Naive thymus-derived CD4-positive, alpha-beta T cell (primary cell): ENCODE measurements at regions of chr1 and their contacts with region 1.

Region 1: DNA sequence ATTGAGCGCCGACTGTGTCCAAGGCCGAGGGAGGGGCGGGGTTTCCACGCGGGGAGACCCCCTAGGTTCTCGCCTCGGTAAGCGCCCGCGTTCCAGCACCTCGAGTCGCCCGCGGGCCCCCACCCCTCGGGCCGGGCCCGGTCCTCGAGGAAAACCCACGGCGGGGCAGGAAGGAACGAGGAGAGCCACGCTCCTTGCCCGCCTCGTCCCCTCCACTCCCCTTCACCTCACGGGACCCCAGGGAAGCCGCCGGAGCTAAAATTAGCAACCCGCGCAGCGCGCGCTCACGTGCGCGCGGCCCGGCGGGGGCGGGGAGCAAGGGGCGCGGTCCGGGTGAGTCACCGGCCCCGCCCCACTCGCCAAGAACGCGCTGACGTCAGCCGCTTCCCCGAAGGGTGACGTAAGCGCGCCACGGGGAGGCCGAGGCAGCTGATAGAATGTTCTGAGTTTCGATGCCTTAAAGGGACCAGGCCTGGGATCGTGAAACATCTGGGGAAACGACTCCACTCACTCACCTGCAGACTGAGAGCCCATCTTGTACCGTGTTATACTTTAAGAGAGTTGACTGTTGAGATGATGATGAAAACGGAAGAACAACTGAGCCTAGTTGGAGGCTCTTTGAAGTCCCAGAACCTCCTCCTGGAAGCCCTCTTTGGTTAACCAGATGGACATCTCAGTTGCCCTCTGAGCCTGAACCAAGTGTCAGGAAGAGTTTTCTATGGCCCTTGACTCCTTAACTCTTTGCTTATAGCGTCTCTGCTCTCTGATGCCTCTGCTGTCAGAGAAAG is 49.7 kb upstream of the ATF3 start:
- DNase-seq: peak; percentile 83 to 93 (median 91)
- ATAC-seq: peak; percentile 97
- H3K4me3 ChIP-seq: peak overlapping the region; percentile 54
- H3K4me3 Mint-ChIP-seq: peak overlapping the region; percentile 82 to 95 (median 90)
- H3K27ac ChIP-seq: peak overlapping the region; percentile 74
- H3K27ac Mint-ChIP-seq: peak overlapping the region; percentile 91 to 99 (median 98)
- H3K4me1 ChIP-seq: peaks cover 7 to 13% of the 10 kb centered on the region in 2 donors
- H3K4me1 Mint-ChIP-seq: peaks cover 6 to 15% (median 9%) of the 10 kb centered on the region in 7 donors
- H3K27me3 ChIP-seq: no peaks in the 10 kb centered on the region
- H3K27me3 Mint-ChIP-seq: peaks cover 0 to 45% (median 0%) of the 10 kb centered on the region in 5 donors

Region 2: GRCh38 chr1:211675230-211676105 is 883.4 kb before region 1 on chr1 and contains the start of gene NEK2:
- CTCF ChIA-PET with region 1: no interaction called
- POLR2A ChIA-PET with region 1: no interaction called
- intact Hi-C with region 1: loop called in 1 of 2 experiments (anchors 5 kb)
- DNase-seq: peak; percentile 53 to 90 (median 85)
- ATAC-seq: peak; percentile 97
- H3K4me3 ChIP-seq: peak within 1 kb of the TSS; percentile 76
- H3K4me3 Mint-ChIP-seq: peak within 1 kb of the TSS; percentile 88 to 96 (median 92)
- H3K27ac ChIP-seq: peak within 1 kb of the TSS; percentile 56
- H3K27ac Mint-ChIP-seq: peak within 1 kb of the TSS; percentile 45 to 88 (median 80)
- H3K4me1 ChIP-seq: peaks cover 5 to 7% of the 10 kb centered on the region in 2 donors
- H3K4me1 Mint-ChIP-seq: peaks cover 8 to 38% (median 13%) of the 10 kb centered on the region in 7 donors
- H3K27me3 ChIP-seq: no peaks in the 10 kb centered on the region
- H3K27me3 Mint-ChIP-seq: no peaks in the 10 kb centered on the region
- total RNA-seq, gene NEK2: 0.16 to 26.5 (median 0.25) TPM in 4 of 5 experiments, not detected in the other

Region 3: DNA sequence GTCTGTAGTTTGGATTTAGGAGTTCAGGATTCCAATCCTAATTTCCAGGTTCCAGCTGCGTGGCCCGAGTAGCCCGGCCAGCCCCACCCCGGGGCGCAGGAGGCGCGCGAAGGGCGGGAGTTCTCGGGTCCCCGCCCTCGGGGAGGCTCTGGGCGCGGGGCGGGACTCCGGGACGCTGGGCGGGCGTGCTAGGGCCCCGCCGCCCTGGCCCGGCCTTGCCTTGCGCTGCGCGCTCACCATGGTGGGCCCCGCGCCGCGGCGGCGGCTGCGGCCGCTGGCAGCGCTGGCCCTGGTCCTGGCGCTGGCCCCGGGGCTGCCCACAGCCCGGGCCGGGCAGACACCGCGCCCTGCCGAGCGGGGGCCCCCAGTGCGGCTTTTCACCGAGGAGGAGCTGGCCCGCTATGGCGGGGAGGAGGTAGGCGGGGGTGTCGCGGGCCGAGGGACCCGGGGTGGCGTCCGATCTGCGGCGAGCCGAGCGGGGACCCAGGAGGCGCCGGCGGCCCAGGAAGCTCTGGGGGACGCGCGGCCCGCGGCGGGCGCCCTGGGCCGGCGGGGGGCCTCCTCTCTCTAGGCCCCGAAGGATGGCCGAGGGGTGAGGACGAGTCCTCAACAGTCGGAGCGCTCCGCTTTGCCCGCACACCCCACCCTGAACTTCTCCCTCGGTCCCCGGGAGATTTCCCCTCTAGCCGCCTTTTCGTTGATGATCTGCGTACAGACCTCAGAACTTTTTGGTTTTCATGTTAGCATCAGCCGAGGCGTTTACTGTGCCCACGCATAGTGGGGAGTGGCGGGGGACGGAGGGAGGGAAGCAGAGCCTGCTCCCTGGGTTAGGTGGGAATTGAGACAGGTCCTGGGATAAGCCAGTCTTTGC is 125.9 kb before region 1 on chr1 and contains the start of gene NENF:
- CTCF ChIA-PET with region 1: no interaction called
- POLR2A ChIA-PET with region 1: no interaction called
- intact Hi-C with region 1: loop called in 1 of 2 experiments (anchors 5 kb)
- DNase-seq: peak; percentile 53 to 85 (median 72)
- ATAC-seq: peak; percentile 99
- H3K4me3 ChIP-seq: peak within 1 kb of the TSS; percentile 62
- H3K4me3 Mint-ChIP-seq: peak within 1 kb of the TSS; percentile 77 to 87 (median 82)
- H3K27ac ChIP-seq: peak within 1 kb of the TSS; percentile 77
- H3K27ac Mint-ChIP-seq: peak within 1 kb of the TSS; percentile 42 to 86 (median 63)
- H3K4me1 ChIP-seq: peaks cover 9 to 21% of the 10 kb centered on the region in 2 donors
- H3K4me1 Mint-ChIP-seq: peaks cover 18 to 44% (median 30%) of the 10 kb centered on the region in 7 donors
- H3K27me3 ChIP-seq: no peaks in the 10 kb centered on the region
- H3K27me3 Mint-ChIP-seq: peaks cover 0 to 4% (median 0%) of the 10 kb centered on the region in 5 donors
- total RNA-seq, gene NENF: 16.0 to 23.5 (median 21.0) TPM

Region 4: GRCh38 chr1:212595787-212596714 is 37.2 kb after region 1 on chr1:
- CTCF ChIA-PET with region 1: no interaction called
- POLR2A ChIA-PET with region 1: interaction called, 3 read pairs
- intact Hi-C with region 1: loop called (anchors 1 to 2 kb)
- DNase-seq: peak in 7 of 9 donors; percentile 28 to 78 (median 50)
- ATAC-seq: peak; percentile 94
- H3K4me3 ChIP-seq: peak overlapping the region; percentile 14
- H3K4me3 Mint-ChIP-seq: peak overlapping the region; percentile 4 to 84 (median 72)
- H3K27ac ChIP-seq: no peak overlapping the region
- H3K27ac Mint-ChIP-seq: peak overlapping the region; percentile 19 to 99 (median 79)
- H3K4me1 ChIP-seq: peaks cover 8 to 11% of the 10 kb centered on the region in 2 donors
- H3K4me1 Mint-ChIP-seq: peaks cover 0 to 27% (median 14%) of the 10 kb centered on the region in 7 donors
- H3K27me3 ChIP-seq: no peaks in the 10 kb centered on the region
- H3K27me3 Mint-ChIP-seq: peaks cover 8 to 19% (median 12%) of the 10 kb centered on the region in 5 donors

Region 5: GRCh38 chr1:212630158-212630900 is 71.4 kb after region 1 on chr1:
- CTCF ChIA-PET with region 1: no interaction called
- POLR2A ChIA-PET with region 1: no interaction called
- intact Hi-C with region 1: loop called in 1 of 2 experiments (anchors 2 kb)
- DNase-seq: peak in 8 of 9 donors; percentile 26 to 59 (median 44)
- ATAC-seq: peak; percentile 97
- H3K4me3 ChIP-seq: no peak overlapping the region
- H3K4me3 Mint-ChIP-seq: no peak overlapping the region
- H3K27ac ChIP-seq: no peak overlapping the region
- H3K27ac Mint-ChIP-seq: no peak overlapping the region
- H3K4me1 ChIP-seq: peaks cover 0 to 2% of the 10 kb centered on the region in 2 donors
- H3K4me1 Mint-ChIP-seq: peaks cover 0 to 14% (median 5%) of the 10 kb centered on the region in 7 donors
- H3K27me3 ChIP-seq: no peaks in the 10 kb centered on the region
- H3K27me3 Mint-ChIP-seq: peaks cover 0 to 16% (median 6%) of the 10 kb centered on the region in 5 donors

Region 6: DNA sequence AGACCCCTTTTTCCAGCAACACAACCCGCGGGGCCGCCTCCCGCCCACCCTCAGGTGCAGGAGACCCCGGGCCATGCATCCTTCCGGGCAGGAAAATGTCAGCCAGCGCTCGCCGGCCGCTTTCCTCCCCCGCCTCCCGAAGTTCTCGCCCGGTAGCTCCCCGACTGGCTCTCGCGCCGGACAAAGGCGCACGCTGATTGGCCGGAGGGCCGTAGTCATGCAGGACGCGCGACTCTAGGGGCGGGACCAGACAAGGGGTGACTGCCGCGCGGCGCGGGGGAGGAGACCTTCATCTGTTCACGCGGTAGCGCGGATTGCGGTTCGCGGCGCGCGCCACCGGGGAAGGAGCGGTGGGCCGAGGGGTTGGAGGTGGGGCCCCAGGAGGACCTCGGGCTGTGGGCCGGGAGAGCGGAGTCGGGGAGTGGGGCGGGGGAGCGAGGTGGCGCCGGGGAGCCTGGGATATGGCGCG is 299.1 kb after region 1 on chr1 and contains the start of gene FLVCR1:
- CTCF ChIA-PET with region 1: no interaction called
- POLR2A ChIA-PET with region 1: interaction called, 3 read pairs
- intact Hi-C with region 1: loop called in 1 of 2 experiments (anchors 10 kb)
- DNase-seq: peak; percentile 74 to 96 (median 80)
- ATAC-seq: peak; percentile 99
- H3K4me3 ChIP-seq: peak within 1 kb of the TSS; percentile 72
- H3K4me3 Mint-ChIP-seq: peak within 1 kb of the TSS in 6 of 10 donors; percentile 95 to 97 (median 96)
- H3K27ac ChIP-seq: peak within 1 kb of the TSS; percentile 68
- H3K27ac Mint-ChIP-seq: peak within 1 kb of the TSS; percentile 77 to 96 (median 89)
- H3K4me1 ChIP-seq: peaks cover 9 to 16% of the 10 kb centered on the region in 2 donors
- H3K4me1 Mint-ChIP-seq: peaks cover 9 to 34% (median 21%) of the 10 kb centered on the region in 7 donors
- H3K27me3 ChIP-seq: no peaks in the 10 kb centered on the region
- H3K27me3 Mint-ChIP-seq: no peaks in the 10 kb centered on the region
- total RNA-seq, gene FLVCR1: 7.4 to 12.2 (median 8.2) TPM